GM12878 (cell line): ENCODE measurements at regions of chr3 and their contacts with region 1.

Region 1: GRCh38 chr3:142940483-142940882 is 23.0 kb downstream of the PAQR9 start:
- DNase-seq: no peak
- ATAC-seq: peak; percentile 90
- H3K4me3 ChIP-seq: no peak overlapping the region
- H3K27ac ChIP-seq: no peak overlapping the region
- H3K4me1 ChIP-seq: no peaks in the 10 kb centered on the region; the same call in 1 of the 2 replicates
- H3K27me3 ChIP-seq: peaks cover 0 to 2% of the 10 kb centered on the region in 2 experiments; a peak in 1 of 4 replicates
- CTCF ChIP-seq: no peak
- EP300 ChIP-seq: no peak
- POLR2A ChIP-seq: no peak
- RAD21 ChIP-seq: no peak

Region 2: DNA sequence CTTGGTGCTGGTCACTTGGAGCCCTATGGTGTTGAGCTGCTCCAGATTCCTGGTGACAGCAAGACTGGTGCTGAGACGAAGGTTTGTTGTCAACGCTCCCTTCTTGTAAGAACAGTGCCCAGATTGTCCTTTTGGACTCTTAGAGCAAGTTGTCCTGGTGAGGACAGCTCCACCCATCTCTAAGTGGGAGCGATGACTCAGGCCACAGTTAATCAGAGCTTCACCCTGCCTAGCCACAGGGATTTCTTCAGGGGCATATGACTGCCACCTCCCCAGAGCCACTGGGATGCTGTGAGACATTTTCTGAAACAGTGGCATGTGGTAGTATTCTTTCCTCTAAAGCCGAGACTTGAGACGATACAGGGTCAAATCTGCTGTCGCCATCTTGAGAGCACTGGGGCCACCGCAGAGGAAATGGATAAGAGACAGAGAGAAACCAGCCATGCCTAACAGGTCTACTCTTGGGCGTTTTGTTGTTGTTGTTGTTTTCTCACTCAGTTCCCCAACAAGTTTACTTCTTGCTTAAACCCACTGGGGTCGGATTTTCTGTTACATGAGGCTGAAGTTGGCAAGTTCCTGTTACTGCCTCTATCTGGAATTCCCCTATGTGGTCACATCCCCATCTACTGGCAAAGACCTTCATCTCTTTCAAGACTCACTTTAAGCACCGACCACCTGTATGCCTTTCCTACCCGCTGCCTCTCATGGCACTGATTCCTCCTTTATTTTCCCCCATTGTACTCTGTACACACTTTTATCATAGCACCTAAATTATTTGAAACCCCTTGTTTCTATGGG is 35.6 kb before region 1 on chr3:
- CTCF ChIA-PET with region 1: no interaction called
- POLR2A ChIA-PET with region 1: no interaction called
- RAD21 ChIA-PET with region 1: no interaction called
- SMC1A ChIA-PET with region 1: no interaction called
- in situ Hi-C with region 1: no loop called
- intact Hi-C with region 1: no loop called
- DNase-seq: no peak
- ATAC-seq: peak; percentile 79
- H3K4me3 ChIP-seq: no peak overlapping the region
- H3K27ac ChIP-seq: no peak overlapping the region
- H3K4me1 ChIP-seq: peaks cover 6% of the 10 kb centered on the region
- H3K27me3 ChIP-seq: no peaks in the 10 kb centered on the region
- CTCF ChIP-seq: peak in 1 of 3 experiments; percentile 10; a peak in 1 of 6 replicates
- EP300 ChIP-seq: no peak
- POLR2A ChIP-seq: no peak
- RAD21 ChIP-seq: 0 out of 2 replicates have a peak, but pooled peaks have one; percentile 27

Region 3: DNA sequence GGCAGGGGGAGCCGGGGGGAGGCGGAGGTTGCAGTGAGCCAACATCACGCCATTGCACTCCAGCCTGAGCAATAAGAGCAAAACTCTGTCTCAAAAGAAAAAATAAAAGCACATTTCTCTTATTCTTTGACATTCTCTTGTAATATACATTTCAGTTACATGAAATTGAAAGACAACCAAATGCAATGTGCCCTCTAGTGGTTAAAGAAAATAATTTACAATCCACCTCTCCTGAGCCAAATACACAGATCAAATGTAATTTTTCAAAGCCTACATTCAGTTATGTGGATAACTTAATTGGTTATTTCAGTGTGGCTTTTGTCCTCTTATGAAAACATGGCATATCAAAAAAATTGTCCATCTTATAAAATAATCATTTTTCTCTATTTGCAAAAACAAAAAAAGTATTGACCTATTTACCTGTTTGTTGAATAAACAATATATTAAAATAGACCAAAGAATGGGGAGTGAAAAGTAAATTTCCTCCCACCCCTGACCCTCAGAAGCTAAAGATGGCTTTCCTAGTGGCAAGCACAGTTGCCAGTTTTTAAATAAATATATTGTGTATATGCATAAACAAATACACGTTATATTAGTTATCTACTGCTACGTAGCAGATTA is 46.7 kb after region 1 on chr3:
- CTCF ChIA-PET with region 1: interaction called, 11 read pairs
- POLR2A ChIA-PET with region 1: no interaction called
- RAD21 ChIA-PET with region 1: interaction called, 5 read pairs
- SMC1A ChIA-PET with region 1: interaction called, 5 read pairs
- in situ Hi-C with region 1: no loop called
- intact Hi-C with region 1: no loop called
- DNase-seq: no peak
- ATAC-seq: peak; percentile 72
- H3K4me3 ChIP-seq: no peak overlapping the region
- H3K27ac ChIP-seq: no peak overlapping the region
- H3K4me1 ChIP-seq: 0 out of 2 replicates have a peak, but pooled peaks cover 3% of the 10 kb centered on the region
- H3K27me3 ChIP-seq: no peaks in the 10 kb centered on the region
- CTCF ChIP-seq: peak; percentile 49 to 61 (median 56); a peak in 5 of 6 replicates
- EP300 ChIP-seq: no peak
- POLR2A ChIP-seq: no peak
- RAD21 ChIP-seq: peak; percentile 63